Left lung (tissue), 14 donors: ENCODE measurements at regions of chr9 and their contacts with region 1.

Region 1: GRCh38 chr9:98034593-98035546 is 21.7 kb upstream of the NANS start:
- DNase-seq: peak; percentile 60 to 83 (median 80)
- ATAC-seq: peak; percentile 96
- H3K4me3 ChIP-seq: no peak overlapping the region
- H3K27ac ChIP-seq: no peak overlapping the region
- H3K4me1 ChIP-seq: peaks cover 0 to 16% of the 10 kb centered on the region in 2 donors
- H3K27me3 ChIP-seq: no peaks in the 10 kb centered on the region
- CTCF ChIP-seq: peak; percentile 77 to 92

Region 2: DNA sequence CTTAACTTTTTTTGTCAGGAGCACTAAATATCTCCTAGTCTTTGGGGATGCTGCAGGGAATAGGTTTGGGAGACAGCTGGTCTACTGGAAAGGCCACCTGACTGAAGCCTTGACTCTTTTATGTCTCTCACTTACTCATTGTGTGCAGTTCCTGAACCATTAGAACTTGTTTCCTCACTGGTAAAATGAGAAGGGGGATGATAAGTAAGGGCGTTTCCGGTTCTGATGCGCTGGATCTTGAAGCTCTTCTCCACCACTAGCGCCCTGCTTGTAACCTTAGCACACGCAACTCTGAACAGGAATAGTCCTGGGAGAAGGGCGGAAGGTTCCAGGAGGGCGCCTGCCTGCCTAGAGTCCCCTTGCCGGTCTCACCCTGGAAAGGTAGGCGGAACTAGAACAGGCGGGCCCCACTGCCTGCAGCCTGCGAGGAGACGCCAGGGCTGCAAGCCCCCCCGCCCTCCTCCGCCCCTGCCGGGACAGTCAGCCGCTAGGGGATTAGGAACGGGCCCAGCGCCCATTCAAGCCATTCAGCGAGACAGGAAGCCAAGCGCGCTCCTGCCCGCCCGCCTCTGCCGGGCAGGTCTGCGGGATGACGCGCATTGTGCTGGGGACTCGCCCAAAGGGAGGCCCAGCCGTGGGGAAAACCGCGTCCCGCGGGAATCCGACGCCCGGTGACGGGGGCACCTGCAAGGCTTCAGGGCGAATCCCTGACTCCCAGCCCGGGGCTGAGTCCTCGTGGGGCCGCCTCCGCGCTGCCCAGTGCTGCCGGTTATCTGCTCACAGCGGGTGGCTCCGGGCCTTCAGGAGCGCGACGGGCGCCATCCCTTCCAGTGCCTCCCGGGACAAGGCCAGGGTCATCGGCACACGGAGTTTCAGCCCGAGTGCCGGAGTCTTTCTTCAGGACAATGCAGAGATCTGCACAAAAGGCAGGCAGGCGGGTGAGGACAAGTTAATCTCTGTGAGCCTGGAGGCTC is 293.7 kb before region 1 on chr9:
- intact Hi-C with region 1: no loop called
- DNase-seq: peak; percentile 16 to 86 (median 50)
- ATAC-seq: peak; percentile 91
- H3K4me3 ChIP-seq: peak overlapping the region; percentile 12 to 18
- H3K27ac ChIP-seq: no peak overlapping the region
- H3K4me1 ChIP-seq: peaks cover 4 to 8% of the 10 kb centered on the region in 2 donors
- H3K27me3 ChIP-seq: peaks cover 8 to 81% of the 10 kb centered on the region in 2 donors
- CTCF ChIP-seq: no peak

Region 3: GRCh38 chr9:97921959-97922724 is 112.7 kb before region 1 on chr9 and contains the start of gene TRMO:
- intact Hi-C with region 1: loop called in 1 of 2 experiments (anchors 5 kb)
- DNase-seq: peak; percentile 96 to 100 (median 99)
- ATAC-seq: peak; percentile 92
- H3K4me3 ChIP-seq: peak within 1 kb of the TSS; percentile 50 to 60
- H3K27ac ChIP-seq: peak within 1 kb of the TSS; percentile 99 to 100
- H3K4me1 ChIP-seq: peaks cover 14 to 56% of the 10 kb centered on the region in 2 donors
- H3K27me3 ChIP-seq: peaks cover 5 to 7% of the 10 kb centered on the region in 2 donors
- CTCF ChIP-seq: peak; percentile 46 to 54
- polyA plus RNA-seq, gene TRMO: 15.6 to 16.5 (median 16.1) TPM

Region 4: DNA sequence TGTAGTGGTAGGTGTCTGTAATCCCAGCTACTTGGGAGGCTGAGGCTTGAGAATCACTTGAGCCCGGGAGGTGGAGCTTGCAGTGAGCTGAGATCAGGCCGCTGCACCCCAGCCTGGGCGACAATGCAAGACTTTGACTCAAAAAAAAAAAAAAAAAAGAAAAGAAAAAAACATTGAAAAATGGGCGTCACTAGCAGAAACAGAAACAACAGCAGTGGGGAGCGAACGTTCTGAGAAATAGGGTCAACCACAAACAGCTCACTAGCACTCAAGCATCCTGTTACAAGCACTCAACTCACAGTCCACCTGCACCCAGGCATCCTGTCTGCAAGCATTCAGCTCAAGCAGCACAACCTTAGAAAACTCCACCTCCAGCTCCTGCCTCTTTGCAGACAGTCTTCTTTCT is 67.0 kb after region 1 on chr9:
- intact Hi-C with region 1: no loop called
- DNase-seq: peak in 2 of 4 donors; percentile 35 to 68
- ATAC-seq: peak; percentile 81
- H3K4me3 ChIP-seq: no peak overlapping the region
- H3K27ac ChIP-seq: peak overlapping the region in 1 of 2 donors; percentile 45
- H3K4me1 ChIP-seq: peaks cover 0 to 47% of the 10 kb centered on the region in 2 donors
- H3K27me3 ChIP-seq: no peaks in the 10 kb centered on the region
- CTCF ChIP-seq: no peak

Region 5: DNA sequence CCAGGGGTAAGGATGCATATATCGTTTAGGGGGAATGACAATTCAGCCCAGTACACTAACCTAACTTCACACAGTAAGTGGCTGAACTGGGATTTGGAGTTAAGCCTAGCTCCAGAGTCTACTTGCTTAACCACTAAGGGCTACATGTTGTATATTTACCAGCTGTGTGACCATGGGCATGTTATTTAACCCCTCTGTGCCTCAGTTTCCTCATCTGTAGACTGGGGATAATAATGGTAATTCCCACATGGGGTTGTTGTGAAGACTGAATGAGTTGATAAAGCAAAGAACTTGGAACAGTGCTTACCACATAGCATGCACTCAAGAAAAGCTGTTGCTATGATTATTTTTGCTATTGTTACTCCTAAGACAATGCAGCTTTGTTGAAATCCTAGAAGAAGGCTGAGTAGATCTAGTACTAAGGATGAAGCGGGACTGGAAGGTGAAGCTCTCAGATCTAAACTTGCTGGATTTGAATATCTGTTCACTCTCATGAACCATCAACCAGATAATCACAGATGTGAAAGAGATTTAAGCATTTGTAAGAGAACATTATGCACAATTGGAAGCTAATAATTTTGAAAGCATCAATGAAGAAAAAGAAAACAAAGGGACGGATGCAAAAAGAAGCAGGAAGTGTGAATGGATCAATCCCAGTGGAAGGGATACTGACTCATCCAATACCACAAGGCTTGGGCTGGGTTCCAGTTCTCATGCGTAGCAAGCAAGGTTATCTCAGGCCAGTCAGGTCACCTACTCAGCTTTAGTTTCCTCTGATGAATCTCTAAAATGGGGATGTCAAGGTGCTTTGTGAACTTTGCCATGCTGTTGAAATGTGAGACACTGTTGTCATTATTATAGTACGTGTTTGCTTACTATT is 299.1 kb after region 1 on chr9:
- intact Hi-C with region 1: no loop called
- DNase-seq: no peak
- ATAC-seq: no peak
- H3K4me3 ChIP-seq: no peak overlapping the region
- H3K27ac ChIP-seq: peak overlapping the region in 1 of 2 donors; percentile 37
- H3K4me1 ChIP-seq: no peaks in the 10 kb centered on the region
- H3K27me3 ChIP-seq: no peaks in the 10 kb centered on the region
- CTCF ChIP-seq: no peak